HCT116 (cell line): ENCODE measurements at regions of chr5 and their contacts with region 1.

Region 1: DNA sequence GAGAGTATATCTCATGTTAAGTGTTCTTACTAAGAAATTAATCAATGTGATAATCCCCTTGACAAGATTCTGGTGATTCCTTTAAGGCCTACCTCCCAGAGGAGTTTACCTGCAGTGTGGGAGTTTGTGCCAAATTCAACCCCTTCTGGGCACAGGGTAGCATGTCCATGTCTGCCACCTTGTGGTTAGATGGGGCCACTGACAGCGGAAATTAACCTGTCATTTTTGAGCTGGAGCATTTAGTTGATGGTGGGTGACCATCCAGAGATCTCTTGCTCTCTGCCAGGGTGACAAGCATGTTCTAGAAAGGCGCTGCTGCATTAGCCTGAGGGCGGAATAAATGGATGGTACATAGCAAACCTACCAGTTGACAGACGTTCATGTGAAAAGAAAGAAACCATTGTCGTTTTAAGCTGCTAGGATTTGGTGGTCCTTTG is 132.2 kb downstream of the FBXO4 start:
- DNase-seq: peak; percentile 51
- ATAC-seq: peak; percentile 97
- H3K4me3 ChIP-seq: no peak overlapping the region
- H3K27ac ChIP-seq: no peak overlapping the region
- H3K4me1 ChIP-seq: no peaks in the 10 kb centered on the region
- H3K27me3 ChIP-seq: no peaks in the 10 kb centered on the region; the same call in 1 of the 2 replicates
- CTCF ChIP-seq: peak; percentile 52 to 87 (median 79); a peak in 5 of 6 replicates
- POLR2A ChIP-seq: no peak
- RAD21 ChIP-seq: peak; percentile 76

Region 2: DNA sequence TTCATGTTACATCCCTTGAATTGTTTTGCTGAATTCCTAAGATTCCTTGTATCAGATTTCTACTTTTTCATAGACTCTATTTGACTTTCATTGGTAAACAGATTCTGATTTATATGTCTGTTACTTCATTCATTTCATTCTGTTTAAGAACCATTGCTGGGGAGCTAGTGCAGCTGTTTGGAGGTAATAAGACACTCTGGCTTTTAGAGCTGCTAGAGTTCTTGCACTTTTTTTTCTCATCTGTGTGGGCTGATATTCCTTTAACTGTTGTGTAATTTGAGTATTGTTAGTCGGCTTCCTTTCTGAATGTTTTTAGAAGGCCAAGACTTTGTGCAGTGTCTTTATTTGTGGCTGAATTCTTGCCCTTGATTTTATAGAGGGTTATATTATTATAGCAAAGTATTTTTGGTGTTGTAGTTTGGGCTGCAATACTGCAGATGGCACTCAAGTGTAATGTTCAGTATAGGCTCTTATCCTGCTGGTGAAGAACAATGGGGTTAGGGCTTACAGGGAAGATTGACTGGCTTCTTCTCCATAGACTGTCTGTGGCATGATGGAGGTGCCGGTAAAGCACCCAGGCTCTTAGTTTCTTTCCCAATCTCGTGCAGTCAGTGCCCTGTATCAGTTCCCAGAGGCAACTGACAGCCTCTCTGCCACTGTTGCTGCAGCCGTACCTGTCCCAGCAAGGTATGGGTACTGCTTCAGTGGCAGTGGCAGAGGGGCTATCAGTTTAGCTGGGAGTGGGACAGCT is 349.2 kb before region 1 on chr5:
- CTCF ChIA-PET with region 1: interaction called, 3 read pairs
- POLR2A ChIA-PET with region 1: no interaction called
- RAD21 ChIA-PET with region 1: no interaction called
- intact Hi-C with region 1: loop called (anchors 5 kb)
- DNase-seq: peak; percentile 21
- ATAC-seq: peak; percentile 94
- H3K4me3 ChIP-seq: no peak overlapping the region
- H3K27ac ChIP-seq: no peak overlapping the region
- H3K4me1 ChIP-seq: no peaks in the 10 kb centered on the region
- H3K27me3 ChIP-seq: peaks cover 5% of the 10 kb centered on the region; the same call in 1 of the 2 replicates
- CTCF ChIP-seq: peak; percentile 39 to 64 (median 59); a peak in 5 of 6 replicates
- POLR2A ChIP-seq: no peak
- RAD21 ChIP-seq: peak; percentile 75

Region 3: GRCh38 chr5:42005561-42006153 is 51.6 kb before region 1 on chr5:
- CTCF ChIA-PET with region 1: interaction called, 11 read pairs
- POLR2A ChIA-PET with region 1: no interaction called
- RAD21 ChIA-PET with region 1: no interaction called
- intact Hi-C with region 1: no loop called
- DNase-seq: peak; percentile 13
- ATAC-seq: peak; percentile 76
- H3K4me3 ChIP-seq: no peak overlapping the region
- H3K27ac ChIP-seq: no peak overlapping the region
- H3K4me1 ChIP-seq: no peaks in the 10 kb centered on the region
- H3K27me3 ChIP-seq: no peaks in the 10 kb centered on the region
- CTCF ChIP-seq: peak; percentile 7 to 76 (median 68); a peak in 4 of 6 replicates
- POLR2A ChIP-seq: no peak
- RAD21 ChIP-seq: no peak; the same call in 1 of the 2 replicates

Region 4: GRCh38 chr5:42035526-42035925 is 21.7 kb before region 1 on chr5:
- CTCF ChIA-PET with region 1: interaction called, 11 read pairs
- POLR2A ChIA-PET with region 1: no interaction called
- RAD21 ChIA-PET with region 1: no interaction called
- intact Hi-C with region 1: no loop called
- DNase-seq: no peak
- ATAC-seq: no peak
- H3K4me3 ChIP-seq: no peak overlapping the region
- H3K27ac ChIP-seq: no peak overlapping the region
- H3K4me1 ChIP-seq: no peaks in the 10 kb centered on the region
- H3K27me3 ChIP-seq: peaks cover 21% of the 10 kb centered on the region
- CTCF ChIP-seq: no peak
- POLR2A ChIP-seq: no peak
- RAD21 ChIP-seq: no peak

Region 5: DNA sequence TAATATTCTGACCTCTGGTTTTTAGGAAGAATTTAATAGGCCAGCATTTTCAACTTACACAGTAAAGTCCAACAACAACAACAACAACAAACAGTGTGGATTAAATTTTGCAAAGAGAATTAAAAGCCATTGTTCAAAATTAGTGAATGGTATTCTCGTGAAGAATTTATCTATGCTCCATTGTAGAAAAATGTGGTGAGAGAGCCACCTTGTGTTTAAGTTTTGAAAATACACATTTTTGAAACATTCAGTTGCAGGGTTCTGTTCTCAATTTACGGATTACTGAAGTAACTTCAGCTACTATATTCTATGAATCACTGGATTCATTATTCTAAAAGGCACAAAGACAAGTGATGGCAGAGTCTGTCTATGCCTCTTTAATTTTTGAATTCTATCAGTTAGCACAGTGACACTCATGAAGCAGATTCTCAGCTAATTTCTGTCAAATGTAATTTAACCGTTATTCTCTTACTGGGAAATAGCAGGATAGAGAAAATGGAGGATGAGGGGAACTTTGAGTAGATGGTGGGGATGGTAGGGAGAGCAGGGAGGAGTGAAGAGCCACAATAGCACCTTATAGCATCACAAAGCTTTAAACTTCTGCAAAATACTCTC is 710.3 kb after region 1 on chr5:
- CTCF ChIA-PET with region 1: interaction called, 10 read pairs
- POLR2A ChIA-PET with region 1: no interaction called
- RAD21 ChIA-PET with region 1: no interaction called
- intact Hi-C with region 1: no loop called
- DNase-seq: no peak
- ATAC-seq: 0 out of 2 replicates have a peak, but pooled peaks have one; percentile 57
- H3K4me3 ChIP-seq: no peak overlapping the region
- H3K27ac ChIP-seq: no peak overlapping the region
- H3K4me1 ChIP-seq: no peaks in the 10 kb centered on the region
- H3K27me3 ChIP-seq: no peaks in the 10 kb centered on the region
- CTCF ChIP-seq: peak; percentile 29 to 65 (median 45); a peak in 4 of 6 replicates
- POLR2A ChIP-seq: no peak
- RAD21 ChIP-seq: peak; percentile 66

Region 6: DNA sequence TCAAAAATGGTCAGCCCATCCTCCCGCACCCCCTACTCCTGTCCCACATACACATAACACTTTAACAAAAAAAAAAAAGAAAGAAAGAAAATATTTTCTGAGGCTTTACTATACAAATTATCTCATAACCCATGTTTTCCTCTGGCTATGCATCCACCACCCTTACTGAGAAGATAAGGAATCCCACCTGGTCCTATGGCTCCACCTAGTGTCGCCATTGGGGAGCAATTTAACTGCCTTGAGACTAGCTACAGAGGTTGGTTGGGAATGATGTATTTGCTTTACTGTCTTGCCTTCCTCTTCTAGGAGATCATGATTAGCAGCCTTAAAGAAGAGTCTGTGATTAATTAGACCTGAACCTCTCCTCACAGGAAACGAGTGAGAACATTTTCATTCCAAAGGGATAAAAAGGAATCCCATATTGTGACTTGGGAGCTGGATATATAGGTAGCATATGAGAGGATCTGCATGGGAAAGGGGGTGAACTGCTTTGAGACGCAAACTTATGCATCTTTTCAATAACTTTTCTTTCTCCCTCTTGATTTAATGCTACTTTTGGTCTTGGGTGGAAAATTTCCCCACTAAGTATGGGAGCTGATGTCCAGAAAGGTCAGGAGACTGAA is 832.1 kb after region 1 on chr5:
- CTCF ChIA-PET with region 1: interaction called, 7 read pairs
- POLR2A ChIA-PET with region 1: no interaction called
- RAD21 ChIA-PET with region 1: no interaction called
- intact Hi-C with region 1: loop called (anchors 5 kb)
- DNase-seq: peak; percentile 66
- ATAC-seq: peak; percentile 94
- H3K4me3 ChIP-seq: no peak overlapping the region
- H3K27ac ChIP-seq: no peak overlapping the region
- H3K4me1 ChIP-seq: peaks cover 0 to 4% of the 10 kb centered on the region in 2 experiments; a peak in 2 of 4 replicates
- H3K27me3 ChIP-seq: peaks cover 5% of the 10 kb centered on the region
- CTCF ChIP-seq: peak; percentile 52 to 93 (median 86); a peak in 5 of 6 replicates
- POLR2A ChIP-seq: no peak
- RAD21 ChIP-seq: peak; percentile 85

Region 7: DNA sequence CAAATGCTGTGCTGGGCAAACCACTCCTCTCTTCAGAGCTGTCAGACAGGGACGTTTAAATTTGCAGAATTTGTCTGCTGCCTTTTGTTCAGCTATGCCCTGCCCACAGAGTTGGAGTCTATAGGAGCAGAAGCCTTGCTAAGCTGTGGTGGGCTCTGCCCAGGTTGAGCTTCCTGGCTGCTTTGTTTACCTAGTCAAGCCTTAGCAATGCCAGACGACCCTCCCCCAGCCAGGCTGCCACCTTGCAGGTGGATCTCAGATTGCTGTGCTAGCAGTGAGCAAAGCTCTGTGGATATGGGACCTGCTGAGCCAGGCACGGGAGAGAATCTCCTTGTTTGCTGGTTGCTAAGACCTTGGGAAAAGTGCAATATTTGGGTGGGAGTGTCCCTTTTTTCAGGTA is 1860.7 kb after region 1 on chr5:
- CTCF ChIA-PET with region 1: no interaction called
- POLR2A ChIA-PET with region 1: no interaction called
- RAD21 ChIA-PET with region 1: no interaction called
- intact Hi-C with region 1: no loop called
- DNase-seq: no peak
- ATAC-seq: no peak
- H3K4me3 ChIP-seq: no peak overlapping the region
- H3K27ac ChIP-seq: no peak overlapping the region
- H3K4me1 ChIP-seq: no peaks in the 10 kb centered on the region
- H3K27me3 ChIP-seq: no peaks in the 10 kb centered on the region
- CTCF ChIP-seq: no peak
- POLR2A ChIP-seq: no peak
- RAD21 ChIP-seq: no peak